ENCODE measurements at regions of chr6 and their contacts with region 1.

Region 1: DNA sequence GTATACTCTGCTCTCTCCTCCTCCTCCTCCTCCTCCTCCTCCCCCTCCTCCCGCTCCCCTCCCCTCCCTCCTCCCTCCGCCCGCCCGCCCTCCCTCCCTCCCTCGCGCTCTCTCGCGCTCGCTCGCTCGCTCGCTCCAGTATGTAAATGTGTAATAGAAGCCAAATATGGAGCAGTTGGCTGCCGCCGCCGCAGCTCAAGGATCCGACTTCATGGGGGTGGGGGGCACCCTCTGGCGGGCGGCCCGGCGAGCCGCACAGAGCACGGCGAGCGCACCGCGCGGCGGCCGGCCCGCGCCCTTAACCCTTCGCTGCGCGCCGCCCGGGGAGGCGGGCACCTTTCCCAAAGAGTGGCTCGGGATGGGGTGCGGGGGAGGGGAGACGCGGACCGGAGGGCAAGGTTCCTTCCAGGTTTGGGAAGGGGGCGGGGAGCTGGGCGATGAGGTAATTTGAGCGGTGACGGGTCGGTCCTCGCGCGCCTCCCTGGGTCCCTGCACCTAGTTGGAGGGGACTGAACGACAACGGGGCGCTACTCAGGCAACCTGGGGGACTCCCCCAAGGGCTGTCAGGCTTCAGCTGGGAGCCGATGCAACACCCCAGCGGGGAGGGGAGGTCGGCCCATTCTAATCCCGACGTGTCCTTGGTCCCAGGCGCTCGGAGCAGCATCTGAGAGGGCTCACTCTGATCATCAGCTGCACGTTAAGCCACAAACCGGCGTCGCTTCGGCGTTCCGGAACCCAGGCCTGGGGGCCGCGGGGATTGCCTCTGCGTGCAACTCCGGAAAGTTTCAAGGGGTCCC is 409 bp upstream of the ATXN1 start:
- DNase-seq: peak; percentile 91
- ATAC-seq: peak; percentile 46
- H3K4me3 ChIP-seq: peak overlapping the region; percentile 91
- H3K27ac ChIP-seq: peak overlapping the region; percentile 98
- H3K4me1 ChIP-seq: peaks cover 5% of the 10 kb centered on the region
- H3K27me3 ChIP-seq: no peaks in the 10 kb centered on the region
- CTCF ChIP-seq: peak; percentile 56
- POLR2A ChIP-seq: peak; percentile 83
- RAD21 ChIP-seq: peak; percentile 59

Region 2: DNA sequence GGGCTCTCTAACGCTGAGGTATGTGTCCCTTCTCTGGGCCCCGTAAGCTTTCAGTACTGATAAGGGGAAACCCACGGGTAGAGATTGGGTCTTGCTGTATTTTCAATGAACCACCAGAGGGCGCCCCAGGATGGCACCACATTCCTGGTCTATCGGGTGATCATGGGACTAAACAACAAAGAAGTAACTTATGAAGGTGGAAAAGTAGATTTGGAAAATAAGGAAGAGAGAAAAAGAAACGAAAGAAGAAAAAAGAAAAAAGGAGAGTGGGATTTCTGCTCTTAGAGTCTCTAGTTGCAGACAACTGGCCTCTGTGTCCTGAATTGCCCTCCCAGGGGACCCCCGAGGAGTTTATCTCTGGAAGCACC is 429.5 kb before region 1 on chr6:
- CTCF ChIA-PET with region 1: interaction called, 4 read pairs
- POLR2A ChIA-PET with region 1: no interaction called
- dilution Hi-C with region 1: no loop called
- in situ Hi-C with region 1: loop called (anchors 5 kb)
- intact Hi-C with region 1: loop called (anchors 2 kb)
- DNase-seq: peak; percentile 78
- ATAC-seq: peak; percentile 57
- H3K4me3 ChIP-seq: no peak overlapping the region
- H3K27ac ChIP-seq: peak overlapping the region; percentile 18; the same call in 1 of the 2 replicates
- H3K4me1 ChIP-seq: peaks cover 16% of the 10 kb centered on the region
- H3K27me3 ChIP-seq: no peaks in the 10 kb centered on the region
- CTCF ChIP-seq: peak; percentile 94
- POLR2A ChIP-seq: no peak
- RAD21 ChIP-seq: peak; percentile 93

Region 3: DNA sequence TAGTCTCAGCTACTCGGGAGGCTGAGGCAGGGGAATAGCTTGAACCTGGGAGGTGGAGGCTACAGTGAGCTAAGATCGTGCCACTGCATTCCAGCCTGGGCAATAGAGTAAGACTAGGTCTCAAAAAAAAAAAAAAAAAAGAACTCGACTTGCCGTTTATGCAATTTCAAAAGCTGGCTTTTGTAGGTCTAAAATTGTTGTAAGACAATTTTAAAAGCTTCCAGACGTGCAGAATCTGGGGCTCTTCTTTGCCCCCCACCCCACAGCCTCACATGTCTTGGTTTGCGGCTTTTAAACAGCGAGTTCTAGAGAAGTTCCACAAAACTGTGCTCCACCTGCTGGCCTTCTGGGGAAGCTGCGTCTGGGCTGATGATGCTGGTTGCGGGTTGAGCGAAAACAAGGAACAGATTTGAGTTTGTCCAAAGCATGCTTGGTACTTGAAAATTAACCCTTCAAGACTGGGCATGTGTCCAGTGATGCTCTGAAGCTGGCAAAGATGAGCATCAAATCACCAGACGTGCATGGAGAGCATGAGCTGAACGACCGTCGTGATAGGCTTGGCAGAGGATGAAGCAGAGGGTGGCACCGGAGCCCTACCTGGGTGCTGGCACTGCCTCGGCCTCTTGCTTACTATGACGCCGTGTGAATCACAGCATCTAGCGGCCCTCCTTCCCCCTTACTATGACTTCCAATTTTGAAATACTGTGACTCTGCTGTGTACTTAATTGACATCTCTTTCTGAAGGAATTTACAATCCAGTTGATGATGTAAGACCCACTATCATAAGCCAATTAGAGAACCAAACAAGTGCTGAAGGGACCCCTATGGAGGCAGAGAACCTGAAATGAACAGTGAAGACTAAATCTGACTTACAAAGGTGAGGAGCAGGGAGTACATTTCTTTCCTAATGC is 351.9 kb before region 1 on chr6:
- CTCF ChIA-PET with region 1: no interaction called
- POLR2A ChIA-PET with region 1: no interaction called
- dilution Hi-C with region 1: no loop called
- in situ Hi-C with region 1: loop called (anchors 10 kb)
- intact Hi-C with region 1: loop called (anchors 5 kb)
- DNase-seq: peak; percentile 45
- ATAC-seq: no peak
- H3K4me3 ChIP-seq: no peak overlapping the region
- H3K27ac ChIP-seq: no peak overlapping the region
- H3K4me1 ChIP-seq: peaks cover 14% of the 10 kb centered on the region
- H3K27me3 ChIP-seq: no peaks in the 10 kb centered on the region
- CTCF ChIP-seq: peak; percentile 50
- POLR2A ChIP-seq: no peak
- RAD21 ChIP-seq: peak; percentile 50

Region 4: GRCh38 chr6:16576451-16577368 is 185.0 kb before region 1 on chr6:
- CTCF ChIA-PET with region 1: no interaction called
- POLR2A ChIA-PET with region 1: interaction called, 10 read pairs
- dilution Hi-C with region 1: no loop called
- in situ Hi-C with region 1: no loop called
- intact Hi-C with region 1: no loop called
- DNase-seq: no peak
- ATAC-seq: no peak
- H3K4me3 ChIP-seq: no peak overlapping the region
- H3K27ac ChIP-seq: no peak overlapping the region
- H3K4me1 ChIP-seq: peaks cover 4% of the 10 kb centered on the region
- H3K27me3 ChIP-seq: no peaks in the 10 kb centered on the region
- CTCF ChIP-seq: no peak
- POLR2A ChIP-seq: no peak
- RAD21 ChIP-seq: no peak

Region 5: GRCh38 chr6:16649241-16649640 is 112.4 kb before region 1 on chr6:
- CTCF ChIA-PET with region 1: no interaction called
- POLR2A ChIA-PET with region 1: no interaction called
- dilution Hi-C with region 1: no loop called
- in situ Hi-C with region 1: no loop called
- intact Hi-C with region 1: no loop called
- DNase-seq: no peak
- ATAC-seq: no peak
- H3K4me3 ChIP-seq: no peak overlapping the region
- H3K27ac ChIP-seq: no peak overlapping the region
- H3K4me1 ChIP-seq: no peaks in the 10 kb centered on the region
- H3K27me3 ChIP-seq: no peaks in the 10 kb centered on the region
- CTCF ChIP-seq: no peak
- POLR2A ChIP-seq: no peak
- RAD21 ChIP-seq: no peak

Region 6: GRCh38 chr6:16723826-16724225 is 37.8 kb before region 1 on chr6:
- CTCF ChIA-PET with region 1: interaction called, 4 read pairs
- POLR2A ChIA-PET with region 1: interaction called, 16 read pairs
- dilution Hi-C with region 1: no loop called
- in situ Hi-C with region 1: no loop called
- intact Hi-C with region 1: loop called (anchors 2 kb)
- DNase-seq: peak; percentile 96
- ATAC-seq: peak; percentile 73
- H3K4me3 ChIP-seq: no peak overlapping the region
- H3K27ac ChIP-seq: peak overlapping the region; percentile 66; the same call in 1 of the 2 replicates
- H3K4me1 ChIP-seq: peaks cover 19% of the 10 kb centered on the region
- H3K27me3 ChIP-seq: no peaks in the 10 kb centered on the region
- CTCF ChIP-seq: no peak
- POLR2A ChIP-seq: no peak
- RAD21 ChIP-seq: no peak; the same call in 1 of the 2 replicates

Region 7: GRCh38 chr6:17032988-17033634 is 271.4 kb after region 1 on chr6:
- CTCF ChIA-PET with region 1: no interaction called
- POLR2A ChIA-PET with region 1: no interaction called
- dilution Hi-C with region 1: no loop called
- in situ Hi-C with region 1: no loop called
- intact Hi-C with region 1: loop called (anchors 2 kb)
- DNase-seq: peak; percentile 95
- ATAC-seq: peak; percentile 74
- H3K4me3 ChIP-seq: peak overlapping the region; percentile 35; the same call in 1 of the 2 replicates
- H3K27ac ChIP-seq: peak overlapping the region; percentile 43; the same call in 1 of the 2 replicates
- H3K4me1 ChIP-seq: peaks cover 7% of the 10 kb centered on the region
- H3K27me3 ChIP-seq: no peaks in the 10 kb centered on the region
- CTCF ChIP-seq: no peak
- POLR2A ChIP-seq: no peak
- RAD21 ChIP-seq: no peak